Naive thymus-derived CD4-positive, alpha-beta T cell (primary cell): ENCODE measurements at regions of chr21 and their contacts with region 1.

Region 1: GRCh38 chr21:14602382-14602958 is 56.4 kb upstream of the SAMSN1 start:
- DNase-seq: no peak
- ATAC-seq: no peak
- H3K4me3 ChIP-seq: peak overlapping the region; percentile 46
- H3K4me3 Mint-ChIP-seq: peak overlapping the region; percentile 11 to 82 (median 62)
- H3K27ac ChIP-seq: no peak overlapping the region
- H3K27ac Mint-ChIP-seq: peak overlapping the region in 7 of 9 donors; percentile 3 to 80 (median 58)
- H3K4me1 ChIP-seq: peaks cover 10 to 11% of the 10 kb centered on the region in 2 donors
- H3K4me1 Mint-ChIP-seq: peaks cover 14 to 48% (median 27%) of the 10 kb centered on the region in 7 donors
- H3K27me3 ChIP-seq: no peaks in the 10 kb centered on the region
- H3K27me3 Mint-ChIP-seq: no peaks in the 10 kb centered on the region

Region 2: DNA sequence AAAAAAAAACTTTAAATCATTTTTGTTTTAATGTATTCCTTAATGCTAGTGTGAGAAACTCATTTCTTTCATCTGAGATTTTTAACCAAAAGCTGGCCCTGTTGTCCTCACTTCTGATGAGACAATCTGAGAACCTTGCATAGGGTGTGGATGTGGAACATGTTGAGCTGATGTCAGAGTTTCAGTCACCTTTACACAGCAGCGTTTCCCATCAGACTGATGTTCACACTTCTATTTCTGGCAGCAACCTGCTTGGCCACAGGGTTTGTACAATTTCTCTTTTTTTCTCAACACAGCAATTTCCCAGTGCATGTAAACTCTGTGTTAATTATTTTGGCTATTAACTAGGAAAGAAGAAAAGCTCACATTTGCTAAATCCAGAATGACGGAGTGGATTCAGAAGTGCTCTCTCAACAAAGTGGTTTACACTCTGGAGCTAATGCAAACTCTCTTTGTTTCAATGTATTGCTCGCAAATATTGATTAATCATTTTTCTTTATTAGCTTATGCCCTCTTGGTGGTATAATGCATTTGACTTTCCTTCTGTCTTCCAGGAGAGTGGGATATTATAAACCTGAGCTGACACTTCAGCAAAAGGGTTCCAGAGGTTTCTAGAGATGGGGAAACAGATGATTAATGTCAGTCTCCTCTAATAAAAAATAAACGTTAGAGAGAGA is 149.0 kb before region 1 on chr21:
- CTCF ChIA-PET with region 1: no interaction called
- POLR2A ChIA-PET with region 1: no interaction called
- intact Hi-C with region 1: no loop called
- DNase-seq: no peak
- ATAC-seq: no peak
- H3K4me3 ChIP-seq: no peak overlapping the region
- H3K4me3 Mint-ChIP-seq: peak overlapping the region in 1 of 10 donors; percentile 53
- H3K27ac ChIP-seq: no peak overlapping the region
- H3K27ac Mint-ChIP-seq: peak overlapping the region in 1 of 9 donors; percentile 87
- H3K4me1 ChIP-seq: peaks cover 0 to 4% of the 10 kb centered on the region in 2 donors
- H3K4me1 Mint-ChIP-seq: peaks cover 0 to 67% (median 10%) of the 10 kb centered on the region in 7 donors
- H3K27me3 ChIP-seq: no peaks in the 10 kb centered on the region
- H3K27me3 Mint-ChIP-seq: no peaks in the 10 kb centered on the region

Region 3: DNA sequence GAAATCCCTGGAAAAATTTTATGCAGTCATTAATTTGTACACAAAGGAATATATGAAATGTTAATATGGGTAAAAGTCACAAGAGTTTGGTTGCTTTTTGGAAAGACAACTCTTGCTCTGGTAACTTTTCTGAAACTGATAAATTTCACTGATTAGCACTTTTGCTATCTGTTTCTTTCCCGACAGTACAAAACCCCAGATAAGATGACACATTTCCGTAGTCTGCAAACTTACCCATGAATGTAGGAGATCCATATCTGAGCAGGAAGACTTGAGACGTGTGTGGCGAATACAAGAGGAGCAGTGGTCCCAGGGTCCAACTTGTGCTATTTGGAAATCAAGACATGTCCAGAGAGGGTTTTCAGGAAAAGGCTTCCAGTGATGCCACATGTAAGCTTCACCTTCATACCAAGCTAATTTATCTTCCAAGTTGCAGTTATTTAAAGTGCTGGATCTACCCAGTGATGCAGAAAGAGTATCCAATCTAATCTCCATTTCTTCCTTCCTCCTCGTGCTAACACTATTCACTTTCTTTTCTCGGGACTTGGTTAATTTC is 20.5 kb before region 1 on chr21:
- CTCF ChIA-PET with region 1: no interaction called
- POLR2A ChIA-PET with region 1: no interaction called
- intact Hi-C with region 1: loop called in 1 of 2 experiments (anchors 2 kb)
- DNase-seq: peak in 2 of 9 donors; percentile 4 to 21
- ATAC-seq: peak; percentile 64
- H3K4me3 ChIP-seq: no peak overlapping the region
- H3K4me3 Mint-ChIP-seq: peak overlapping the region; percentile 0 to 72 (median 25)
- H3K27ac ChIP-seq: no peak overlapping the region
- H3K27ac Mint-ChIP-seq: peak overlapping the region in 2 of 9 donors; percentile 5 to 74
- H3K4me1 ChIP-seq: no peaks in the 10 kb centered on the region
- H3K4me1 Mint-ChIP-seq: peaks cover 0 to 31% (median 5%) of the 10 kb centered on the region in 7 donors
- H3K27me3 ChIP-seq: no peaks in the 10 kb centered on the region
- H3K27me3 Mint-ChIP-seq: no peaks in the 10 kb centered on the region